ENCODE measurements at regions of chr2 and their contacts with region 1.

Region 1: GRCh38 chr2:32010670-32011484 is at the start of gene MEMO1:
- DNase-seq: peak; percentile 91
- H3K4me3 Mint-ChIP-seq: peak within 1 kb of the TSS; percentile 81
- H3K27ac Mint-ChIP-seq: peak within 1 kb of the TSS; percentile 90
- H3K4me1 Mint-ChIP-seq: peaks cover 39% of the 10 kb centered on the region
- H3K27me3 Mint-ChIP-seq: no peaks in the 10 kb centered on the region
- total RNA-seq, gene MEMO1: 40.7 to 41.5 TPM

Region 2: GRCh38 chr2:31937741-31938140 is 73.1 kb before region 1 on chr2:
- CTCF ChIA-PET with region 1: no interaction called
- POLR2A ChIA-PET with region 1: no interaction called
- DNase-seq: no peak
- H3K4me3 Mint-ChIP-seq: no peak overlapping the region
- H3K27ac Mint-ChIP-seq: no peak overlapping the region
- H3K4me1 Mint-ChIP-seq: peaks cover 8% of the 10 kb centered on the region
- H3K27me3 Mint-ChIP-seq: no peaks in the 10 kb centered on the region

Region 3: GRCh38 chr2:31997653-31998052 is 13.2 kb before region 1 on chr2:
- CTCF ChIA-PET with region 1: no interaction called
- POLR2A ChIA-PET with region 1: interaction called, 10 read pairs
- DNase-seq: no peak
- H3K4me3 Mint-ChIP-seq: no peak overlapping the region
- H3K27ac Mint-ChIP-seq: peak overlapping the region; percentile 52
- H3K4me1 Mint-ChIP-seq: peaks cover 43% of the 10 kb centered on the region
- H3K27me3 Mint-ChIP-seq: no peaks in the 10 kb centered on the region

Region 4: DNA sequence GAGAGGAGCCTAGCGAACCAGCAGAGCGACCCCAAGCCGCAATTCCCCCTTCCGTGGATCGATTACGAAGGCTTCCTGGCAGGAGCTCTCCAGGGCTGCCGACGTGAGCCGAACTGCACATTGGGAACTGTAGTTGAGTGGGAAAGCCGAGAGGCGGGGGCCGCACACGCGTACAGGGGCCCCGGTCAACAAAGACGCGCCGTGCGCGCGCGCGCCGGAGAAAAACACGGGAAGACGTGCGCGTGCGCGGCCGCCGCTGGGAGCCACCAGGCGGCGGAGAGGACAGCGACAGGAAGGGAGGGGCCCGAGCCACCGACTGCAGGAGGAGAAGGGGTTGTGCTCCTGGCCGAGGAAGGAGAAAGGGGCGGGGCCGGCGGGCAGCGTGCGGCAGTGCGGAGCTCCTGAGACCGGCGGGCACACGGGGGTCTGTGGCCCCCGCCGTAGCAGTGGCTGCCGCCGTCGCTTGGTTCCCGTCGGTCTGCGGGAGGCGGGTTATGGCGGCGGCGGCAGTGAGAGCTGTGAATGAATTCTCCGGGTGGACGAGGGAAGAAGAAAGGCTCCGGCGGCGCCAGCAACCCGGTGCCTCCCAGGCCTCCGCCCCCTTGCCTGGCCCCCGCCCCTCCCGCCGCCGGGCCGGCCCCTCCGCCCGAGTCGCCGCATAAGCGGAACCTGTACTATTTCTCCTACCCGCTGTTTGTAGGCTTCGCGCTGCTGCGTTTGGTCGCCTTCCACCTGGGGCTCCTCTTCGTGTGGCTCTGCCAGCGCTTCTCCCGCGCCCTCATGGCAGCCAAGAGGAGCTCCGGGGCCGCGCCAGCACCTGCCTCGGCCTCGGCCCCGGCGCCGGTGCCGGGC is 52.7 kb after region 1 on chr2 and contains the start of gene SPAST:
- CTCF ChIA-PET with region 1: interaction called, 9 read pairs
- POLR2A ChIA-PET with region 1: interaction called, 16 read pairs
- DNase-seq: peak; percentile 97
- H3K4me3 Mint-ChIP-seq: peak within 1 kb of the TSS; percentile 94
- H3K27ac Mint-ChIP-seq: peak within 1 kb of the TSS; percentile 86
- H3K4me1 Mint-ChIP-seq: peaks cover 31% of the 10 kb centered on the region
- H3K27me3 Mint-ChIP-seq: peaks cover 2% of the 10 kb centered on the region
- total RNA-seq, gene SPAST: 21.1 to 21.8 TPM

Measured in activated CD4-positive, alpha-beta memory T cell treated with anti-CD3 and anti-CD28 coated beads, Interleukin-2, amount 10 ng/mL, durations not matched to agents 7 days and 5 days (primary cell).